Mammary epithelial cell (primary cell): ENCODE measurements at regions of chr1 and their contacts with region 1.

Region 1: GRCh38 chr1:32533792-32534327 is 5.4 kb upstream of the ZBTB8A start:
- DNase-seq: no peak
- H3K4me3 ChIP-seq: no peak overlapping the region
- H3K27ac ChIP-seq: no peak overlapping the region
- H3K4me1 ChIP-seq: peaks cover under 1% of the 10 kb centered on the region
- H3K27me3 ChIP-seq: no peaks in the 10 kb centered on the region
- CTCF ChIP-seq: no peak

Region 2: GRCh38 chr1:32592943-32593342 is 59.1 kb after region 1 on chr1:
- CTCF ChIA-PET with region 1: no interaction called
- dilution Hi-C with region 1: loop called (anchors 5 kb)
- in situ Hi-C with region 1: no loop called
- intact Hi-C with region 1: no loop called
- DNase-seq: no peak
- H3K4me3 ChIP-seq: no peak overlapping the region
- H3K27ac ChIP-seq: no peak overlapping the region
- H3K4me1 ChIP-seq: no peaks in the 10 kb centered on the region
- H3K27me3 ChIP-seq: no peaks in the 10 kb centered on the region
- CTCF ChIP-seq: no peak